ENCODE measurements at regions of chr13 and their contacts with region 1.

Region 1: GRCh38 chr13:27533155-27533643 is 82.8 kb upstream of the MTIF3 start:
- DNase-seq: peak; percentile 67
- H3K4me3 Mint-ChIP-seq: no peak overlapping the region
- H3K27ac Mint-ChIP-seq: no peak overlapping the region
- H3K4me1 Mint-ChIP-seq: peaks cover 8% of the 10 kb centered on the region
- H3K27me3 Mint-ChIP-seq: no peaks in the 10 kb centered on the region

Region 2: GRCh38 chr13:27374650-27375049 is 158.5 kb before region 1 on chr13:
- CTCF ChIA-PET with region 1: no interaction called
- POLR2A ChIA-PET with region 1: no interaction called
- intact Hi-C with region 1: loop called (anchors 2 kb)
- DNase-seq: peak; percentile 70
- H3K4me3 Mint-ChIP-seq: no peak overlapping the region
- H3K27ac Mint-ChIP-seq: no peak overlapping the region
- H3K4me1 Mint-ChIP-seq: peaks cover 5% of the 10 kb centered on the region
- H3K27me3 Mint-ChIP-seq: peaks cover 20% of the 10 kb centered on the region

Measured in activated CD4-positive, alpha-beta memory T cell treated with anti-CD3 and anti-CD28 coated beads for 36 hours (primary cell).